Esophagus squamous epithelium (tissue), 5 donors: ENCODE measurements at regions of chr18 and their contacts with region 1.

Region 1: GRCh38 chr18:59980188-59980637 is 80.4 kb downstream of the PMAIP1 start:
- DNase-seq: no peak
- H3K4me3 ChIP-seq: no peak overlapping the region
- H3K27ac ChIP-seq: no peak overlapping the region
- H3K4me1 ChIP-seq: peaks cover 0 to 30% (median 0%) of the 10 kb centered on the region in 3 donors
- H3K27me3 ChIP-seq: no peaks in the 10 kb centered on the region
- CTCF ChIP-seq: no peak
- POLR2A ChIP-seq: no peak

Region 2: DNA sequence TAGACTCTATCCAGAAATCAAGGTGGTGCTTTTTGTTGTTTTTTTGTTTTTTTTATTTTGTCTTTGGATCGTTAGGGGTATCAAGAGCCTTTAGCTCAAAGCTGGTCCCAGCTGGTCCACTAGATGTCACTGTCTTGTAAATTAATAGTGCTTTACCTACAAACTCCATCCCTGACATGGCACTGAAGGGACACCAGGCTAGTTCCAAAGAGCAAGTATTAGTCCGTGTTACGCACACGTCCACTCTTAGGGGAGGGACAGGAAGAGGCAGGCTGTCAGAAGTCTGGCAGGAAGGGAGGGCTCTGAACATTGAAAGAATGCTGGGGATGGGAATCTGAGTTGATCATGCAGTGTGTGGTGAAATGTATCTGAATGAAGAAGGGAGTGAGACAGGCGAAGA is 197.1 kb before region 1 on chr18:
- intact Hi-C with region 1: no loop called
- DNase-seq: no peak
- H3K4me3 ChIP-seq: no peak overlapping the region
- H3K27ac ChIP-seq: peak overlapping the region in 1 of 4 donors; percentile 17
- H3K4me1 ChIP-seq: peaks cover 0 to 3% (median 0%) of the 10 kb centered on the region in 3 donors
- H3K27me3 ChIP-seq: no peaks in the 10 kb centered on the region
- CTCF ChIP-seq: peak in 4 of 6 experiments; percentile 25 to 42 (median 36)
- POLR2A ChIP-seq: no peak

Region 3: GRCh38 chr18:59839931-59840685 is 140.1 kb before region 1 on chr18:
- intact Hi-C with region 1: loop called (anchors 5 kb)
- DNase-seq: no peak
- H3K4me3 ChIP-seq: no peak overlapping the region
- H3K27ac ChIP-seq: no peak overlapping the region
- H3K4me1 ChIP-seq: no peaks in the 10 kb centered on the region
- H3K27me3 ChIP-seq: peaks cover 0 to 13% (median 0%) of the 10 kb centered on the region in 4 donors
- CTCF ChIP-seq: peak in 1 of 6 experiments; percentile 17
- POLR2A ChIP-seq: no peak

Region 4: DNA sequence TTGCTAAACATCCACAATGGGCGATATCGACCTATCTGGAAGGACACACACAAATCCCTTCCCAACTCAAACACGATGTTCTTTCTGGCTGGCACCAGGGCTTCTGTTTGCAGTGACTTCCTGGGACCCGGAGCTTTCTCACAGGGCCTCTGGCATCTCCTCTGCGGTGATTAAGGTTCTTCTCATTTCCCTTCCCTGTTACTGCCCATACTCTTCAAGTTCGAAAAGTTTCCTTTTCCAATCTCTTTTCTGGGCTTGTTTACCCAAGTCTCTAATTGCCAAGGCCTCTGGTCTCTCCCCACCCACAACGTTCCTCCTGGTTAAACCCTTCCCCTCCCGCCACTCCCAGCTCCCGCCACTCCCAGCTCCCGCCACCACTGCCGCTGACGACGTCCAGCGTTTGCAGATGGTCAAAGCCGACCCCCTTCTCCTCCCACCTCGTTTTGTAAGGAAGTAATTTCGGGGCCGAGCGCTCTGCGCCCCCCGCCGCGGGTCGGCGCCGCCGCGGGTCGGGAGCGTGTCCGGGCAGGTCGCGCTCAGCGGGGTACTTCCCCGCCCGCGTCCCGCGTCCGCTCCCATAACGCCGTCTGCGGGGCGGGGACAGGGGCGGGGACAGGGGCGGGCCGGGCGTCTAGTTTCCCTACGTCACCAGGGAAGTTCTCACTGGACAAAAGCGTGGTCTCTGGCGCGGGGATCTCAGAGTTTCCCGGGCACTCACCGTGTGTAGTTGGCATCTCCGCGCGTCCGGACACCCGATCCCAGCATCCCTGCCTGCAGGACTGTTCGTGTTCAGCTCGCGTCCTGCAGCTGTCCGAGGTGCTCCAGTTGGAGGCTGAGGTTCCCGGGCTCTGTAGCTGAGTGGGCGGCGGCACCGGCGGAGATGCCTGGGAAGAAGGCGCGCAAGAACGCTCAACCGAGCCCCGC is 80.7 kb before region 1 on chr18 and contains the start of gene PMAIP1:
- intact Hi-C with region 1: no loop called
- DNase-seq: peak; percentile 18
- H3K4me3 ChIP-seq: peak within 1 kb of the TSS; percentile 67 to 89 (median 74)
- H3K27ac ChIP-seq: peak within 1 kb of the TSS; percentile 92 to 96 (median 94)
- H3K4me1 ChIP-seq: peaks cover 0 to 49% (median 12%) of the 10 kb centered on the region in 3 donors
- H3K27me3 ChIP-seq: peaks cover 0 to 24% (median 0%) of the 10 kb centered on the region in 4 donors
- CTCF ChIP-seq: peak in 1 of 6 experiments; percentile 19
- POLR2A ChIP-seq: peak in 2 of 4 donors; percentile 88 to 93
- total RNA-seq, gene PMAIP1: 6.9 to 12.5 (median 7.8) TPM